ENCODE measurements at regions of chr12 and their contacts with region 1.

Region 1: GRCh38 chr12:10395390-10395998 is 5.7 kb upstream of the KLRK1 start:
- DNase-seq: peak; percentile 83
- H3K4me3 ChIP-seq: peak overlapping the region; percentile 79
- H3K27ac ChIP-seq: peak overlapping the region; percentile 97
- H3K4me1 ChIP-seq: peaks cover 74% of the 10 kb centered on the region
- CTCF ChIP-seq: no peak

Region 2: GRCh38 chr12:8697476-8698131 is 1697.9 kb before region 1 on chr12 and contains the start of gene RIMKLB:
- CTCF ChIA-PET with region 1: no interaction called
- POLR2A ChIA-PET with region 1: no interaction called
- intact Hi-C with region 1: loop called (anchors 10 kb)
- DNase-seq: peak; percentile 89
- H3K4me3 ChIP-seq: peak within 1 kb of the TSS; percentile 86
- H3K27ac ChIP-seq: peak within 1 kb of the TSS; percentile 100
- H3K4me1 ChIP-seq: peaks cover 73% of the 10 kb centered on the region
- CTCF ChIP-seq: 0 out of 2 replicates have a peak, but pooled peaks have one; percentile 4
- total RNA-seq, gene RIMKLB: 109 and 117 TPM in 2 replicates

Region 3: GRCh38 chr12:9731797-9732196 is 663.7 kb before region 1 on chr12:
- CTCF ChIA-PET with region 1: no interaction called
- POLR2A ChIA-PET with region 1: interaction called, 6 read pairs
- intact Hi-C with region 1: loop called (anchors 2 kb)
- DNase-seq: peak; percentile 77
- H3K4me3 ChIP-seq: peak overlapping the region; percentile 78
- H3K27ac ChIP-seq: peak overlapping the region; percentile 99
- H3K4me1 ChIP-seq: peaks cover 77% of the 10 kb centered on the region
- CTCF ChIP-seq: no peak

Region 4: DNA sequence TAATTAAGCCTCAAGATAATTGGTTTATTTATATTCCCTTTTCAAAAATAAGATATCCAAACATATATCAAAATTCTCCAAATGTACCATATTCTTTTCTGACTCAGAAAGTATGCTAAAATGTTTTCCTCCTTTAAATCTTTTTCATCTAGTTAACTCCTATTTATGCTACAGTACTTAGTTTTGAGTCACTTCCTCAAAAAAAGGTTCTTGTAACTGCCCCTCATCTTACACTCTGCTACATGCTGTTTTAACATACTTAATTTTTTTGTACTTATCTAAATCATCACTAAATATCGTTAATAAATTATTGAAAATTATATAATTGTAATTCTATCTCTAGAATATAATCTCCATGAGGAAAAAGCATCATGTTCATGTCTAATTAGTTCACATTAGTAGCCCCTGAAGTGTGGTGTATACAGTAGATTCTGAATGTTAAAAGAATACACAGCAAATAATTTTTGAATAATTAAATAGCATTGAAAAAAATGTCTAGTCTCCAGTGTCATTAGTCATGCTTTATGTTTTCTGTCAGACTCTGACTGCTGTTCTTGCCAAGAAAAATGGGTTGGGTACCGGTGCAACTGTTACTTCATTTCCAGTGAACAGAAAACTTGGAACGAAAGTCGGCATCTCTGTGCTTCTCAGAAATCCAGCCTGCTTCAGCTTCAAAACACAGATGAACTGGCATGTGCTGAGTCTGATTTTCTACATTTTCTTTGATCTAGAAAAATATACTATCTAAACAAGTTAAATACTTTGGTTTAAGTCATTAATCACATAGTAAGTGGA is 84.4 kb before region 1 on chr12:
- CTCF ChIA-PET with region 1: no interaction called
- POLR2A ChIA-PET with region 1: no interaction called
- intact Hi-C with region 1: no loop called
- DNase-seq: no peak
- H3K4me3 ChIP-seq: no peak overlapping the region
- H3K27ac ChIP-seq: no peak overlapping the region
- H3K4me1 ChIP-seq: no peaks in the 10 kb centered on the region
- CTCF ChIP-seq: no peak

Region 5: DNA sequence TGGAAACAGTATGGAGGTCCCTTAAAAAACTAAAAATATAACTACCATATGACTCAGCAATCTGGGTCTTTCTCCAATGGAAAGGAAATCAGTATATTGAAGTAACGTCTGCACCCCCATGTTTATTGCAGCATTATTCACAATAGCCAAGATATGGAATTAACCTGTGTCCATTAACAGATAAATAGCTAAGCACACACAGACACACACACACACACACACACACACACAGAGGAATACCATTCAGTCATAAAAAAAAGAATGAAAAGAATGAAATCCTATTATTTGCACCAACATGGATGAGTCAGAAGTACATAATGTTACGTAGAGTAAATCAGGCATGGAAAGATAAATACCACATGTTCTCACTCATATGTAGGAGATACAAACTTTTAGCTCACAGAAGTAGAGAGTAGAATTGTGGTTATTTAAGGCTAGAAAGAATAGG is 10.3 kb before region 1 on chr12:
- CTCF ChIA-PET with region 1: no interaction called
- POLR2A ChIA-PET with region 1: interaction called, 32 read pairs
- intact Hi-C with region 1: loop called (anchors 1 kb)
- DNase-seq: no peak
- H3K4me3 ChIP-seq: no peak overlapping the region
- H3K27ac ChIP-seq: no peak overlapping the region
- H3K4me1 ChIP-seq: peaks cover 33% of the 10 kb centered on the region
- CTCF ChIP-seq: no peak

Region 6: GRCh38 chr12:10491766-10492165 is 96.3 kb after region 1 on chr12:
- CTCF ChIA-PET with region 1: no interaction called
- POLR2A ChIA-PET with region 1: no interaction called
- intact Hi-C with region 1: no loop called
- DNase-seq: no peak
- H3K4me3 ChIP-seq: no peak overlapping the region
- H3K27ac ChIP-seq: no peak overlapping the region
- H3K4me1 ChIP-seq: no peaks in the 10 kb centered on the region
- CTCF ChIP-seq: no peak

Region 7: GRCh38 chr12:10562306-10562933 is 166.9 kb after region 1 on chr12:
- CTCF ChIA-PET with region 1: interaction called, 3 read pairs
- POLR2A ChIA-PET with region 1: interaction called, 15 read pairs
- intact Hi-C with region 1: loop called (anchors 1 kb)
- DNase-seq: peak; percentile 76
- H3K4me3 ChIP-seq: no peak overlapping the region
- H3K27ac ChIP-seq: peak overlapping the region; percentile 98
- H3K4me1 ChIP-seq: peaks cover 50% of the 10 kb centered on the region
- CTCF ChIP-seq: peak; percentile 98